ENCODE measurements at regions of chr3 and their contacts with region 1.

Region 1: DNA sequence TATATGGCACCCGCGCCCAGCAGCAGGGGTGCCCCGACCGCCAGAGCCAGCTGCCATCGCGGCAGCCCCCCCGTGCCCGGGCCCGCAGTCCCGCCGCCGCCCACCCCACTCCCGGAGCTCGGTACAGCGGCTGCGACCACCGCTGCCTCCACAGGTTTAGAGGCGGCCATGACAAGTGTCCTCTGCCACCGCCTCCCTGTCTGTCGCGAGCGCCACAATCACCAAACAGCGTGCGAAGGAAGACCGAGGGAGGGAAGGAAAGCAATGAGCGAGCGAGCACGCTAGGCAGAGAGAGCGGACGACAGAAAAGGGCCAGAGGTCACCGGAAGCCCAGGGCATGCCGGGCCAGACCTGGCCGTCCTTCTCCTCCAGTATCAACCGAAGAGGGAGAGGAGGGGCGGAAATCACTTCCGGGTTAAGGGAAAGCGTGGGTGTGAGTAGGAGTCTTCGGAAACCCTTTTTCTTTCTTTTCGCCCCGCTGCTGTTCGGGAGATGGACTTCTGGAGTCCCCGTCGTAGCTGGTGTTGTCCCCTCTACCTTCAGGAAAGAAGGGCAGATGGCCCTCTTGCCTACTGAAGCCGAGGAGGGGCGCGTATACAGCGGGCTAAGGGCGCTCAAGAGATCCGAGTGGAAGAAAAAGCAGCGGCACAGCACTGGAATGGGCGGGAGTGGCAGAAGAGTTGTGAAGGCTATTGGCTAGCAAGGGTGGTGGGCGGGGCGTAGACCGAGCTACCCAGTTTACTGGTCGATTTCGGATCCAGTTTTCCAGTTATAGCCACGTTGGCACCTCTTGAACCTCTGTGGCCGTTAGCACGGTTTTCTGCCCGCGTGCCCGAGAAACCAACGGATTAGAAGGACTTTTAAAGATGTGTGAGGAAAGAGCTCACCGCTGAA is at the starts of genes LNP1 and TOMM70:
- DNase-seq: peak; percentile 83 to 95 (median 94)
- ATAC-seq: peak; percentile 93
- H3K4me3 ChIP-seq: peak within 1 kb of the TSS; percentile 90
- H3K4me3 Mint-ChIP-seq: peak within 1 kb of the TSS; percentile 87 to 99 (median 96)
- H3K27ac ChIP-seq: peak within 1 kb of the TSS; percentile 85
- H3K27ac Mint-ChIP-seq: peak within 1 kb of the TSS; percentile 90 to 98 (median 95)
- H3K4me1 ChIP-seq: peaks cover 21 to 34% of the 10 kb centered on the region in 2 donors
- H3K4me1 Mint-ChIP-seq: peaks cover 36 to 90% (median 77%) of the 10 kb centered on the region in 7 donors
- H3K27me3 ChIP-seq: no peaks in the 10 kb centered on the region
- H3K27me3 Mint-ChIP-seq: no peaks in the 10 kb centered on the region
- total RNA-seq, gene LNP1: 0.82 to 2.4 (median 1.6) TPM
- total RNA-seq, gene TOMM70: 18.3 to 43.7 (median 35.5) TPM

Region 2: DNA sequence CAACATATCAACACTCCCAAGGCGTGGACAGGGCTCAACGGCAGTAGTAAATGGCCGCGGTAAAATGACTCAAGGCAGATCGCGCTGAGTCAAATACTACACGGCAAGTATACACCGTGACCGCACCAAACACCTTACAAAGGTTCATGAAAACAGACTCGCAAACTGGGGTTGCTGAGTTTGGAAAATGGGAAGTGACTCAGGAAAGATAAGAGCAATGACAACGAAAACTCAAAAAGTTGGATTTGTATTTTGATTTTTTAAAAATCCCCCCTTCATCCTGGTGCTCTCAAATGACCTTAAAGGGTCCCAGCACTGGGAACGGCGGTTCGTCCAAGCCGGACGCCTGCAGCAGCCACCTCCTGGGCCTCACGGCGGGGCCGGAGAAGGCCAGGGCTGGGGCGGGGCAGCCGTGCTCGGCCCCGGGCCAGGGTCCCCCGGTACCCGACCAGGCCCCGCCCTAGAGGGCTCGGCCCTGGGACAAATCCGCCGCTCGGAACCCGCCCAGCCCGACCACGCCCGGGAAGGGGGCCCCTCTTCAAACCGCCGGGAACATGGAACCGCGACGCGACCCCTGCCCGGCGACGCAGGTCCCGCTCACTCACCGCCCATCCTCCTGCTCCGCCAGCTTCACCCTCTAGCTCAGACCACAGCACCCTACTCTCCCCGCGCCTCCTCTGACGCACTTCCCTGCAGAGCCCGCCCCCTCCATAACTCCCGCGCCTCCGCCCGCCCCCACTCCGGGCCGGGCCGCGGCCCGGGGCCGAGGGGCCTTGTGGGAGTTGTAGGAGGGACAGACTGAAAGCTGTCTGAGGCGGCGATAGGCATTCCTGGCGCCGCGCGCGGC is 1878.6 kb before region 1 on chr3 and contains the start of gene CLDND1:
- CTCF ChIA-PET with region 1: no interaction called
- POLR2A ChIA-PET with region 1: no interaction called
- intact Hi-C with region 1: loop called in 1 of 2 experiments (anchors 1 kb)
- DNase-seq: peak; percentile 88 to 94 (median 93)
- ATAC-seq: peak; percentile 99
- H3K4me3 ChIP-seq: peak within 1 kb of the TSS; percentile 68
- H3K4me3 Mint-ChIP-seq: peak within 1 kb of the TSS; percentile 83 to 99 (median 92)
- H3K27ac ChIP-seq: peak within 1 kb of the TSS; percentile 90
- H3K27ac Mint-ChIP-seq: peak within 1 kb of the TSS; percentile 67 to 99 (median 96)
- H3K4me1 ChIP-seq: peaks cover 16 to 27% of the 10 kb centered on the region in 2 donors
- H3K4me1 Mint-ChIP-seq: peaks cover 31 to 62% (median 53%) of the 10 kb centered on the region in 7 donors
- H3K27me3 ChIP-seq: no peaks in the 10 kb centered on the region
- H3K27me3 Mint-ChIP-seq: no peaks in the 10 kb centered on the region
- total RNA-seq, gene CLDND1: 100 to 478 (median 132) TPM

Region 3: GRCh38 chr3:99602183-99602582 is 798.8 kb before region 1 on chr3:
- CTCF ChIA-PET with region 1: no interaction called
- POLR2A ChIA-PET with region 1: no interaction called
- intact Hi-C with region 1: no loop called
- DNase-seq: no peak
- ATAC-seq: no peak
- H3K4me3 ChIP-seq: no peak overlapping the region
- H3K4me3 Mint-ChIP-seq: no peak overlapping the region
- H3K27ac ChIP-seq: no peak overlapping the region
- H3K27ac Mint-ChIP-seq: no peak overlapping the region
- H3K4me1 ChIP-seq: no peaks in the 10 kb centered on the region
- H3K4me1 Mint-ChIP-seq: no peaks in the 10 kb centered on the region
- H3K27me3 ChIP-seq: no peaks in the 10 kb centered on the region
- H3K27me3 Mint-ChIP-seq: peaks cover 0 to 2% (median 0%) of the 10 kb centered on the region in 5 donors

Region 4: GRCh38 chr3:99875929-99876841 is 524.8 kb before region 1 on chr3:
- CTCF ChIA-PET with region 1: no interaction called
- POLR2A ChIA-PET with region 1: no interaction called
- intact Hi-C with region 1: loop called (anchors 2 to 10 kb)
- DNase-seq: peak; percentile 60 to 74 (median 67)
- ATAC-seq: peak; percentile 97
- H3K4me3 ChIP-seq: peak overlapping the region; percentile 56
- H3K4me3 Mint-ChIP-seq: peak overlapping the region; percentile 76 to 87 (median 82)
- H3K27ac ChIP-seq: peak overlapping the region; percentile 59
- H3K27ac Mint-ChIP-seq: peak overlapping the region in 8 of 9 donors; percentile 30 to 86 (median 60)
- H3K4me1 ChIP-seq: peaks cover 10 to 14% of the 10 kb centered on the region in 2 donors
- H3K4me1 Mint-ChIP-seq: peaks cover 3 to 41% (median 17%) of the 10 kb centered on the region in 7 donors
- H3K27me3 ChIP-seq: peaks cover 0 to 6% of the 10 kb centered on the region in 2 donors
- H3K27me3 Mint-ChIP-seq: peaks cover 0 to 48% (median 0%) of the 10 kb centered on the region in 5 donors

Region 5: DNA sequence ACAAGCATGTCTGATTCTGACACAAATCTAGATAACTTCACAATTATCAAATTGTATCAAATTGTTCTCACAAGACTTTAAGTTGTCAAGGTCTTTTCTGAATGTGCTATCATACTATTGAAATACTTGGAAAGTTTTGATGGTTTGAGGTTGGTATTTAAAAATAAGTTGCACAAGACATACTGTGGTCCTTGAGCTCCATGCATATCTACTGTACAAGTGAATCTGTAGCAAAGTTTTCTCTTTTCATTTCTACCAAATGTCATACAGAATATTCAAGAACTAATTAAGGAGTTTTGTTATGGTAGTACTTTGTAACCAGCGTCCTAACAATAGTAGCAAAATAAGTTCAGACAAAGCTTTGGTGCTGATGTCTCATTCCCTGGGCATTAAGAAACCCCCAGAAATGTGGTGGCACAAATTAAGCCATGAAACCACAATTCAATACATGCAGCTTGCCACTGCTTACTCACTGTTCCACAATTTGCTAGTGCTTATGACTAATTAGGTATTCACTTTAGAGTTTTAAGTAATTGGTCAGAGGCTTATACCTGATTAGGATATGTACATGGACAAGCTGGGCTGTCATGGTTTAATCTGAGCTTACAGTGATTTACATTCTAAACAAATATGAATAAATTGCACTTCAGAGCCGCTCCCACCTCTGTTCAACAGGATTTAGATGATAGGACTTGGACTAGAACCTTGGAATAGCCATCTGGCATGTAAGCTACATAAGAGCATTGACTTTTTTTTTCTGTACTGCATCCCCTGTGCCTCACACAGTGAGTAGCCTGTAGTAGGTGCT is 131.4 kb before region 1 on chr3:
- CTCF ChIA-PET with region 1: no interaction called
- POLR2A ChIA-PET with region 1: no interaction called
- intact Hi-C with region 1: no loop called
- DNase-seq: no peak
- ATAC-seq: peak; percentile 22
- H3K4me3 ChIP-seq: no peak overlapping the region
- H3K4me3 Mint-ChIP-seq: peak overlapping the region in 1 of 10 donors; percentile 8
- H3K27ac ChIP-seq: no peak overlapping the region
- H3K27ac Mint-ChIP-seq: peak overlapping the region in 2 of 9 donors; percentile 0 to 14
- H3K4me1 ChIP-seq: no peaks in the 10 kb centered on the region
- H3K4me1 Mint-ChIP-seq: peaks cover 10 to 69% (median 53%) of the 10 kb centered on the region in 7 donors
- H3K27me3 ChIP-seq: no peaks in the 10 kb centered on the region
- H3K27me3 Mint-ChIP-seq: no peaks in the 10 kb centered on the region

Region 6: DNA sequence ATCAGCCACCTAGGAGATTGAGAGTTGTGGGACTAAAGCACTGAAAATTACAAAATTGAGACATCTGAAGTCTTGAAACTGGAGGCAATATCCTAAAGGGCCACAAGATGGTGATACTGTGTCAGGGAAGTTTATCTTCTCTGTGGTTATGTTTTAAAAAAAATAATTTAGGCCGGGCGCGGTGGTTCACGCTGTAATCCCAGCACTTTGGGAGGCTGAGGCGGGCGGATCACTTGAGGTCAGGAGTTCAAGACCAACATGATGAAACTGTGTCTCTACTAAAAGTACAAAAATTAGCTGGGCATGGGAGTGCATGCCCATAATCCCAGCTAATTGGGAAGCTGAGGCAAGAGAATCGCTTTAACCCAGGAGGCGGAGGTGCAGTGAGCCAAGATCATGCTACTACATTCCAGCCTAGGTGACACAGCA is 84.4 kb before region 1 on chr3:
- CTCF ChIA-PET with region 1: no interaction called
- POLR2A ChIA-PET with region 1: no interaction called
- intact Hi-C with region 1: loop called (anchors 2 to 5 kb)
- DNase-seq: peak in 7 of 9 donors; percentile 13 to 60 (median 54)
- ATAC-seq: peak; percentile 95
- H3K4me3 ChIP-seq: no peak overlapping the region
- H3K4me3 Mint-ChIP-seq: peak overlapping the region in 6 of 10 donors; percentile 32 to 67 (median 50)
- H3K27ac ChIP-seq: no peak overlapping the region
- H3K27ac Mint-ChIP-seq: peak overlapping the region in 6 of 9 donors; percentile 57 to 87 (median 70)
- H3K4me1 ChIP-seq: no peaks in the 10 kb centered on the region
- H3K4me1 Mint-ChIP-seq: peaks cover 0 to 19% (median 14%) of the 10 kb centered on the region in 7 donors
- H3K27me3 ChIP-seq: no peaks in the 10 kb centered on the region
- H3K27me3 Mint-ChIP-seq: no peaks in the 10 kb centered on the region

Region 7: DNA sequence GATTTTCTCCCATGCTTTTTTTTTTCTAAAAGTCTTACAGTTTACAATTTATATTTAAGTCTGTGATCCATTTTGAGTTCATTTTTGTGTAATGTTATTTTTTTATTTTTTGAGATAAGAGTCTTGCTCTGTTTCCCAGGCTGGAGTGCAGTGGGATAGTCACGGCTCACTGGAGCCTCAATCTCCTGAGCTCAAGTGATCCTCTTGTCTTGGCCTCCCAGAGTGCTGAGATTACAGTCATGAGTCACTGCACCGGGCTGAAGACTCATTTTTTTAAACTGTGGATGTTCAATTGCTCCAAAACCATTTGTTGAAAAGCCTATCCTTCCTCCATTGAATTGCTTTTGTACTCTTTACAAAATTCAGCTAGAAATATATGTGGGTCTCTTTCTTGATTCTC is 19.9 kb after region 1 on chr3:
- CTCF ChIA-PET with region 1: no interaction called
- POLR2A ChIA-PET with region 1: no interaction called
- intact Hi-C with region 1: no loop called
- DNase-seq: no peak
- ATAC-seq: no peak
- H3K4me3 ChIP-seq: no peak overlapping the region
- H3K4me3 Mint-ChIP-seq: no peak overlapping the region
- H3K27ac ChIP-seq: no peak overlapping the region
- H3K27ac Mint-ChIP-seq: no peak overlapping the region
- H3K4me1 ChIP-seq: no peaks in the 10 kb centered on the region
- H3K4me1 Mint-ChIP-seq: peaks cover 0 to 2% (median 0%) of the 10 kb centered on the region in 7 donors
- H3K27me3 ChIP-seq: no peaks in the 10 kb centered on the region
- H3K27me3 Mint-ChIP-seq: peaks cover 0 to 15% (median 0%) of the 10 kb centered on the region in 5 donors

Region 8: DNA sequence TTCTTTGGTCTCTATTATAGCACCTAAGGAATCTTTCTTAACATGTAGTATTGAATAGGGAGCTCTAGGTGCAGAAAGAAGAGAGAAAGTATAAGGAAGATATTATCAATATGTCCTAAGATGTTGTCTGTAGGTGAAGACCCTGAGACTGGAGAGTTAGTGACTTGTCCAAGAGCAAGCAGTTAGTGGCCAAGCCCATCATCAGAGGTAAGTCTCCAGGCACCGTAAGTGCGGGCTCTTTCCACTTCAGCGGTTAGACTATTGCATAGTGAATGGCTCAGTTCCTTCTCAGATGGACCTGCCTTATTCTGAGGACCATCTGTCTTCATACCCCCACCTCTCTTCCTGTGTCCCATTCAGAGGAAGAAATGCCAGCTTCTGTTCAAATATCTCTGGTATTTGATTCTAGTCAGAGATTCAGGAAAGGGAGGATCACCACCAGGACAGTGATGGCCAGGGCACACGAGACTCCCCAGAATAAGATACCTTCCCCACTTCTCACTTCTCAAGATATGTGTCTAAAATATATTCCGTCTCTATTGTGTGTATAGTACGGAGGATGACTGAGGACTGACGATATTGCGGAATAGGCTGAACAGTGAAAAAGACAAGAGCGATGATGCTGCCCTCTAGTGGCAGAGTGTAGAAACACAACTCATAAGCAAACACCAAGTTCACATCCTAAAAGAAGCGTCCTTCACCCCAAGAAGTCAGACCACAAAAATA is 189.2 kb after region 1 on chr3:
- CTCF ChIA-PET with region 1: interaction called, 5 read pairs
- POLR2A ChIA-PET with region 1: interaction called, 3 read pairs
- intact Hi-C with region 1: loop called (anchors 1 to 5 kb)
- DNase-seq: peak; percentile 24 to 73 (median 61)
- ATAC-seq: peak; percentile 98
- H3K4me3 ChIP-seq: no peak overlapping the region
- H3K4me3 Mint-ChIP-seq: peak overlapping the region in 7 of 10 donors; percentile 13 to 77 (median 60)
- H3K27ac ChIP-seq: no peak overlapping the region
- H3K27ac Mint-ChIP-seq: no peak overlapping the region
- H3K4me1 ChIP-seq: no peaks in the 10 kb centered on the region
- H3K4me1 Mint-ChIP-seq: peaks cover 0 to 8% (median 4%) of the 10 kb centered on the region in 7 donors
- H3K27me3 ChIP-seq: no peaks in the 10 kb centered on the region
- H3K27me3 Mint-ChIP-seq: peaks cover 0 to 12% (median 0%) of the 10 kb centered on the region in 5 donors

Region 9: GRCh38 chr3:101573449-101574387 is 1172.7 kb after region 1 on chr3 and contains the start of gene PCNP:
- CTCF ChIA-PET with region 1: no interaction called
- POLR2A ChIA-PET with region 1: no interaction called
- intact Hi-C with region 1: loop called (anchors 1 kb)
- DNase-seq: peak; percentile 95 to 99 (median 98)
- ATAC-seq: peak; percentile 91
- H3K4me3 ChIP-seq: peak within 1 kb of the TSS; percentile 89
- H3K4me3 Mint-ChIP-seq: peak within 1 kb of the TSS; percentile 91 to 100 (median 95)
- H3K27ac ChIP-seq: peak within 1 kb of the TSS; percentile 95
- H3K27ac Mint-ChIP-seq: peak within 1 kb of the TSS; percentile 92 to 99 (median 98)
- H3K4me1 ChIP-seq: peaks cover 33 to 52% of the 10 kb centered on the region in 2 donors
- H3K4me1 Mint-ChIP-seq: peaks cover 31 to 85% (median 72%) of the 10 kb centered on the region in 7 donors
- H3K27me3 ChIP-seq: no peaks in the 10 kb centered on the region
- H3K27me3 Mint-ChIP-seq: peaks cover 0 to 2% (median 0%) of the 10 kb centered on the region in 5 donors
- total RNA-seq, gene PCNP: 129 to 172 (median 160) TPM

Region 10: GRCh38 chr3:101849051-101849720 is 1448.2 kb after region 1 on chr3 and contains the start of gene NFKBIZ:
- CTCF ChIA-PET with region 1: no interaction called
- POLR2A ChIA-PET with region 1: no interaction called
- intact Hi-C with region 1: loop called in 1 of 2 experiments (anchors 10 kb)
- DNase-seq: peak; percentile 81 to 94 (median 88)
- ATAC-seq: peak; percentile 88
- H3K4me3 ChIP-seq: peak within 1 kb of the TSS; percentile 98
- H3K4me3 Mint-ChIP-seq: peak within 1 kb of the TSS; percentile 90 to 100 (median 98)
- H3K27ac ChIP-seq: peak within 1 kb of the TSS; percentile 100
- H3K27ac Mint-ChIP-seq: peak within 1 kb of the TSS; percentile 98 to 100 (median 99)
- H3K4me1 ChIP-seq: peaks cover 20 to 27% of the 10 kb centered on the region in 2 donors
- H3K4me1 Mint-ChIP-seq: peaks cover 36 to 51% (median 42%) of the 10 kb centered on the region in 7 donors
- H3K27me3 ChIP-seq: no peaks in the 10 kb centered on the region
- H3K27me3 Mint-ChIP-seq: no peaks in the 10 kb centered on the region
- total RNA-seq, gene NFKBIZ: 108 to 913 (median 140) TPM